IMR-90 (cell line): ENCODE measurements at regions of chr6 and their contacts with region 1.

Region 1: DNA sequence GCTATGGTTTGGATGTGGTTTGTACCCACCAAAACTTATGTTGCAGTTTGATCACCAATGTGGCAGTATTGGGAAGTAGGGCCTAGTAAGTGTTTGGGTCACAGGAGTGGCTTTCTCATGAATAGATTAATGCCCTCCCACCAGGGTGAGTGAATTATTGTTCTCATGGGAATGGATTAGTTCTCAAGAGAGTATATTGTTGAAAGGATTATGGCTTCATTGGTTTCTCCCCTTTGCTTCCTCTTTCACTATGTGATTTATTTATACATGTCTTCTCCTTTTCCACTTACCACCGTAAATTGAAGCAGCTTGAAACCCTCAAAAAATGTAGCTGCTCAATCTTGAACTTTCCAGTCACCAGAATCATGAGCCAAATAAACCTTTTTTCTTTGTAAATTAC is 10.8 kb downstream of the UFL1 start:
- DNase-seq: no peak
- ATAC-seq: no peak
- H3K4me3 ChIP-seq: no peak overlapping the region
- H3K27ac ChIP-seq: no peak overlapping the region
- H3K4me1 ChIP-seq: no peaks in the 10 kb centered on the region
- H3K27me3 ChIP-seq: no peaks in the 10 kb centered on the region
- CTCF ChIP-seq: no peak
- POLR2A ChIP-seq: no peak
- RAD21 ChIP-seq: no peak

Region 2: DNA sequence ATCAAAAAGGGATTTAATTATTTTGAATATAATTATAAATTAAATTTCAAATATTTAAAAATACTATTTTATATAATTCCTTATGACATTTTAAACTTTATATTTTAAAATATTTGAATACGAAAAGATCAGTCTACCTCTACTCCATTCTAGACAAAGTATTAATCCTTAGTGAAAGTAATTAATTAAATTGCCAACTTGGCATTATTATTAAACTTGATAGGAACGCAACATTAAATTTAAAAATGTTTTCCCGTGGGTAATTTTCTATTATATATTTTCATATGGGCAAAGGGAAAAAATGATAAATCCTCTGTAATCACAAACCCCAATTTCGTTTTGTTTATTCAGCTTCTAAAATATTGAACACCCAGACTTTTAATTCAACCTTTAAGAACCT is 22.2 kb after region 1 on chr6:
- CTCF ChIA-PET with region 1: interaction called, 4 read pairs
- POLR2A ChIA-PET with region 1: no interaction called
- dilution Hi-C with region 1: no loop called
- in situ Hi-C with region 1: no loop called
- intact Hi-C with region 1: loop called (anchors 1 kb)
- DNase-seq: no peak
- ATAC-seq: no peak
- H3K4me3 ChIP-seq: no peak overlapping the region
- H3K27ac ChIP-seq: no peak overlapping the region
- H3K4me1 ChIP-seq: no peaks in the 10 kb centered on the region
- H3K27me3 ChIP-seq: no peaks in the 10 kb centered on the region
- CTCF ChIP-seq: no peak
- POLR2A ChIP-seq: no peak
- RAD21 ChIP-seq: no peak

Region 3: DNA sequence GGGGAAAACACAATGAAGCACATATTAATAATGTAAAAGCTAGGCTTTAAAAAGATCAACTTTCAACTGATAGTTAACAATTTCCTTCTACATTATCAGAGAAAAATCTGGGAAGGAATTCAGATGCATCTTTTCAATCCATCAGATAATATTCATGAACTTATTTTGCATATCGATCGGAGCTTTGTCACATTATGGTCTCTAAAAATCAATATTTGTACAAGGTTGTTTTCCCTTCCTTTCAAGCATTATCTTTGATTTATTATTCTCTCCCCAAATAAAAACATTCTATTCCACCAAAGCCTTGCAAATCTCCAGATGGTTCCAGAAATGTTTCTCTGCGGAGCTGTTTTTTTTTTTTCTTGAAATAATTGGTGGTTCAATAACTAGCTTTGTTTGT is 202.9 kb after region 1 on chr6:
- CTCF ChIA-PET with region 1: no interaction called
- POLR2A ChIA-PET with region 1: no interaction called
- dilution Hi-C with region 1: no loop called
- in situ Hi-C with region 1: no loop called
- intact Hi-C with region 1: no loop called
- DNase-seq: no peak
- ATAC-seq: no peak
- H3K4me3 ChIP-seq: no peak overlapping the region
- H3K27ac ChIP-seq: no peak overlapping the region
- H3K4me1 ChIP-seq: no peaks in the 10 kb centered on the region
- H3K27me3 ChIP-seq: no peaks in the 10 kb centered on the region
- CTCF ChIP-seq: no peak
- POLR2A ChIP-seq: no peak
- RAD21 ChIP-seq: no peak